Breast epithelium (tissue), 4 donors: ENCODE measurements at regions of chr13 and their contacts with region 1.

Region 1: DNA sequence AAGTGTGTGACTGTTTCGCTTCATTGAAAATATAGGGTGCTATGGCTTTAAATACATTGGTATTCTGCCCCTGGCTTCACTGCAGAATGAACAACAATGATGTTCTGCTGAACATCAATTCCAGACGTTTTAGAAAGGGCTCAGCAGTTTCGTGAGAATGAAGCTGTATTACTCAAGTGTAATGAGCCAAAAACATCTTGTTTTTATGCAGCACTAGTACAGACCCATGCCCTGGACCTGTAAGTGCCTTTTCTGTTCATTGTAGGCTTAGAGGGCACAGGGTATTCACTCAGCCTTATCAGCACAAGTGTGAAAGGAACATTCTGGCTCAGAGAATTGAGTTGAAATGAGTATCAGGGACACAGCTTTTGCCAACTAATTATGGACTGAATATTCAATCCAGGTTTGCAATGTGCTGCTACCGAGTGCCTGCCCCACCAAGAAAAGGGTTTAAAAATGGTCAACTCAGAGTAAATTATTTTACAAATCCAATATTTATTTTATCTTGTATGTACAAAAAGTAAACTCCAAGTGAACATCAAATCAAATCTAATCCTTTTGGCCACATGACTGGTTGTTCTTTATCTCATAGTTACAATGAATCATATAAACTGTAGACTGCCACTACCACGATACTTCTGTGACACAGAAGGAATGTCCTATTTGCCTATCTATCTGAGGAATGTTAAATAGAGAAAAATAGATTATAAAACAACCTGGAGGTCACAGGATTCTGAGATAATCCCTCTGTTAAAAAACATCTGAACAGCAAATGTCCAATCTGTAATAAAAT is 362.8 kb downstream of the NALCN start:
- DNase-seq: no peak
- H3K4me3 ChIP-seq: no peak overlapping the region
- H3K27ac ChIP-seq: no peak overlapping the region
- H3K4me1 ChIP-seq: no peaks in the 10 kb centered on the region
- H3K27me3 ChIP-seq: no peaks in the 10 kb centered on the region
- CTCF ChIP-seq: no peak
- POLR2A ChIP-seq: no peak

Region 2: DNA sequence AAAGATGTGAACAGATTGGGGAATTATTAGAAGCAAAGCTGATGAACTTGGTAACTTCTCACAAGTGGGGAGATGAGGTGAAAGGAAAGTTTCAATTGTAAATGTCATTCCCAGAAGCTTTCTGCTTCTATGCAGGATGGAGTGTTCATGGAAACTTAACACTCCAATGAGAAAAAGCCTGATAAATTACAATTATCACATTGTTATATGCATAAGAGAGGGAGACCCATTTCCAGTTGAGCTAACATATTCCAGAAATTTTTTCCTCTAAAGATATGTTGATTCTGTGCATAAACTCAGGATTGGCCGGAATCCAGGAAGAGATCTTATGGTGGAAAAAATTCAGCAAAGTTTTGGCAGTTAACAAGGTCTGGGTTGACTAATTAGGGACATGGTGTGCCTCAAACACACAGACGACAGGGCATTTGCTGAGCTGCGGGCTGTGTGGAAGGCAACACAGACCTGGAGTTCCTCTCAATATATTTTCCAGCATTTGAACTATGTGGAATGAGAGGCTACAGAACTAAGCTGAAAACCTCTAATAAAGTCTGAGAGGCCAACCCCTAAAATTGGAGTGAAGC is 1413.2 kb after region 1 on chr13:
- intact Hi-C with region 1: loop called (anchors 5 kb)
- DNase-seq: no peak
- H3K4me3 ChIP-seq: no peak overlapping the region
- H3K27ac ChIP-seq: no peak overlapping the region
- H3K4me1 ChIP-seq: no peaks in the 10 kb centered on the region
- H3K27me3 ChIP-seq: no peaks in the 10 kb centered on the region
- CTCF ChIP-seq: no peak
- POLR2A ChIP-seq: no peak